ENCODE measurements at regions of chr1 and their contacts with region 1.

Region 1: DNA sequence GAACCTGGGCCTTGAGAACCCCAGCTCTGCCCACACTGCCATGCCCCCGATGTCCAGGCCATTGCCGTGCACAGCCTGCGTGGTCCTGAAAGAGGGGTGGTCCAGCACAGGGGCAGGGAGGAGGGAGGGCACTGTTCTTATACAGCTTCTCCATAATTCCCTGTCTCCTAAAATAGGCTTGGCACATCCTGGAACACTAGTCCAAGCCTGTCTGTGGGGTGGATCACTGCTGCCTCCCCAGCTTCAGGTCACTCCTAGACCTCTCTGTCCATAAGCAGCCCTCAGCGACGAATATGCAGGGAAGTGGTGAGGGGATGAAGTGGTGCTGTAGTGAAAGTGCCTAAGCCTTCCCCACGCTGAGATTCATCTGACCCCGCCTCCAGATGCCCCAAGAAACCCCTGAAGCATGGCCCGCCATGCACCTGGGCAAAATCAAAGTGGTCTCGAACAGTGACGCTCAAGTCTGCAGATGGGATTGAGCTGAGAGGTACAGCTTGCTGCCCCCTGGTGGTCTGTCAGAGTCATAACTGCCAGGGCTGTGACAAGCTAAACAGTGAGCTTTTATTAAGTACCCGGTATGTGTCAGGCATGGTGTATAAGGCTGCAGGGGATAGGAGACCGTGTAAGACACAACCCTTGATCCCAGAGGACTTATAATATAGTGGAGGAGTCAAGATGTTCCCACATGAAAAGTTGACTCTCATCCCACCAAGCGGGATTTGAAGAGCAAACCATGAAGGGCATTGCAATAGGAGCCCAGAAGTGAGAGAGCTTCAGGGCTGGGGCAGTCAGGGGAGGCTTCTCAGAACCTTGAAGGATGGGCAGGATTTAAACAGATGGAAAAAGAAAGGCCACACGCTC is 66.6 kb downstream of the FAM163A start:
- DNase-seq: peak; percentile 36 to 88 (median 66)
- ATAC-seq: peak; percentile 54 to 76 (median 62)
- H3K4me3 ChIP-seq: no peak overlapping the region
- H3K4me3 Mint-ChIP-seq: no peak overlapping the region
- H3K27ac ChIP-seq: no peak overlapping the region
- H3K27ac Mint-ChIP-seq: no peak overlapping the region
- H3K4me1 ChIP-seq: peaks cover 0 to 18% of the 10 kb centered on the region in 2 experiments
- H3K4me1 Mint-ChIP-seq: peaks cover 10 to 13% (median 13%) of the 10 kb centered on the region in 3 donors
- H3K27me3 ChIP-seq: peaks cover 0 to 50% of the 10 kb centered on the region in 2 experiments
- H3K27me3 Mint-ChIP-seq: peaks cover 4 to 5% of the 10 kb centered on the region in 2 donors

Region 2: GRCh38 chr1:179530352-179530751 is 279.4 kb before region 1 on chr1:
- CTCF ChIA-PET with region 1: interaction called in 1 of 2 experiments, 10 read pairs
- POLR2A ChIA-PET with region 1: no interaction called
- DNase-seq: no peak
- ATAC-seq: no peak
- H3K4me3 ChIP-seq: no peak overlapping the region
- H3K4me3 Mint-ChIP-seq: no peak overlapping the region
- H3K27ac ChIP-seq: no peak overlapping the region
- H3K27ac Mint-ChIP-seq: no peak overlapping the region
- H3K4me1 ChIP-seq: no peaks in the 10 kb centered on the region
- H3K4me1 Mint-ChIP-seq: no peaks in the 10 kb centered on the region
- H3K27me3 ChIP-seq: peaks cover 0 to 3% of the 10 kb centered on the region in 2 experiments
- H3K27me3 Mint-ChIP-seq: peaks cover 2 to 7% of the 10 kb centered on the region in 2 donors

Region 3: GRCh38 chr1:179824265-179824664 is 14.5 kb after region 1 on chr1:
- CTCF ChIA-PET with region 1: interaction called, 8 to 16 read pairs
- POLR2A ChIA-PET with region 1: interaction called, 3 to 6 read pairs
- DNase-seq: peak in 1 of 35 experiments; percentile 9
- ATAC-seq: no peak
- H3K4me3 ChIP-seq: no peak overlapping the region
- H3K4me3 Mint-ChIP-seq: no peak overlapping the region
- H3K27ac ChIP-seq: no peak overlapping the region
- H3K27ac Mint-ChIP-seq: no peak overlapping the region
- H3K4me1 ChIP-seq: no peaks in the 10 kb centered on the region
- H3K4me1 Mint-ChIP-seq: peaks cover 0 to 8% (median 0%) of the 10 kb centered on the region in 3 donors
- H3K27me3 ChIP-seq: peaks cover 0 to 9% of the 10 kb centered on the region in 2 experiments
- H3K27me3 Mint-ChIP-seq: peaks cover 0 to 5% of the 10 kb centered on the region in 2 donors

Region 4: GRCh38 chr1:179882243-179883039 is 72.7 kb after region 1 on chr1 and contains the start of gene TOR1AIP1:
- CTCF ChIA-PET with region 1: interaction called, 4 to 16 read pairs
- POLR2A ChIA-PET with region 1: interaction called in 1 of 2 experiments, 3 read pairs
- DNase-seq: peak; percentile 93 to 99 (median 97)
- ATAC-seq: peak; percentile 79 to 84 (median 80)
- H3K4me3 ChIP-seq: peak within 1 kb of the TSS; percentile 92 to 96
- H3K4me3 Mint-ChIP-seq: peak within 1 kb of the TSS; percentile 93 to 99 (median 95)
- H3K27ac ChIP-seq: peak within 1 kb of the TSS; percentile 96
- H3K27ac Mint-ChIP-seq: peak within 1 kb of the TSS; percentile 100
- H3K4me1 ChIP-seq: peaks cover 18 to 26% of the 10 kb centered on the region in 2 experiments
- H3K4me1 Mint-ChIP-seq: peaks cover 60 to 72% (median 69%) of the 10 kb centered on the region in 3 donors
- H3K27me3 ChIP-seq: no peaks in the 10 kb centered on the region
- H3K27me3 Mint-ChIP-seq: no peaks in the 10 kb centered on the region
- total RNA-seq, gene TOR1AIP1: 41.1 to 60.3 (median 44.7) TPM